ENCODE measurements at regions of chr9 and their contacts with region 1.

Region 1: GRCh38 chr9:9942764-9943424 is 669.9 kb downstream of the PTPRD start:
- DNase-seq: peak; percentile 56
- ATAC-seq: peak; percentile 65
- H3K4me3 ChIP-seq: no peak overlapping the region
- H3K4me3 Mint-ChIP-seq: no peak overlapping the region
- H3K27ac ChIP-seq: no peak overlapping the region
- H3K27ac Mint-ChIP-seq: no peak overlapping the region
- H3K4me1 ChIP-seq: no peaks in the 10 kb centered on the region
- H3K4me1 Mint-ChIP-seq: no peaks in the 10 kb centered on the region
- H3K27me3 ChIP-seq: no peaks in the 10 kb centered on the region
- H3K27me3 Mint-ChIP-seq: no peaks in the 10 kb centered on the region
- CTCF ChIP-seq: peak; percentile 95

Region 2: DNA sequence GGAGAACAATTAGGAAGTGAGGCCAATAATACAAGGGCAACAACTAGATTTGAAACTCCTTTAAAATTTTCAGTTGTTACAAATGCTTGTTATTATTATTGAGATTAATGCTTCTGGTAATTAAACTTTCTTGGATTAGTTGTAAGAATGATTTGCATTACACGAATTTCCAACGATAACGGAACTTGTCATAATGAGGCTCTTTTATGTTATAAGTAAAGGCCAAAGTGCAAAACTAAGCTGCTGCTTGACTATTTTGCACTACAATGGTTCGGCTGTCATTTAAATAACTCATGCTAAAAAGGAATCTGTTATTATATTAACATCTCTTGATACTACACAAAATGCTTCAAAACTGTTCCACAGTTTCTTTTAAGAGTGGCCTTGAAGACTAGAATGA is 337.2 kb before region 1 on chr9:
- CTCF ChIA-PET with region 1: interaction called, 30 read pairs
- POLR2A ChIA-PET with region 1: no interaction called
- intact Hi-C with region 1: loop called (anchors 1 kb)
- DNase-seq: no peak
- ATAC-seq: no peak
- H3K4me3 ChIP-seq: no peak overlapping the region
- H3K4me3 Mint-ChIP-seq: no peak overlapping the region
- H3K27ac ChIP-seq: no peak overlapping the region
- H3K27ac Mint-ChIP-seq: no peak overlapping the region
- H3K4me1 ChIP-seq: peaks cover 0 to 4% of the 10 kb centered on the region in 2 donors
- H3K4me1 Mint-ChIP-seq: peaks cover 2% of the 10 kb centered on the region
- H3K27me3 ChIP-seq: no peaks in the 10 kb centered on the region
- H3K27me3 Mint-ChIP-seq: no peaks in the 10 kb centered on the region
- CTCF ChIP-seq: no peak

Region 3: GRCh38 chr9:9881699-9882098 is 61.2 kb before region 1 on chr9:
- CTCF ChIA-PET with region 1: no interaction called
- POLR2A ChIA-PET with region 1: no interaction called
- intact Hi-C with region 1: no loop called
- DNase-seq: no peak
- ATAC-seq: no peak
- H3K4me3 ChIP-seq: no peak overlapping the region
- H3K4me3 Mint-ChIP-seq: no peak overlapping the region
- H3K27ac ChIP-seq: no peak overlapping the region
- H3K27ac Mint-ChIP-seq: no peak overlapping the region
- H3K4me1 ChIP-seq: no peaks in the 10 kb centered on the region
- H3K4me1 Mint-ChIP-seq: no peaks in the 10 kb centered on the region
- H3K27me3 ChIP-seq: no peaks in the 10 kb centered on the region
- H3K27me3 Mint-ChIP-seq: no peaks in the 10 kb centered on the region
- CTCF ChIP-seq: no peak

Region 4: GRCh38 chr9:9924376-9924775 is 18.5 kb before region 1 on chr9:
- CTCF ChIA-PET with region 1: interaction called, 11 read pairs
- POLR2A ChIA-PET with region 1: no interaction called
- intact Hi-C with region 1: no loop called
- DNase-seq: no peak
- ATAC-seq: no peak
- H3K4me3 ChIP-seq: no peak overlapping the region
- H3K4me3 Mint-ChIP-seq: no peak overlapping the region
- H3K27ac ChIP-seq: no peak overlapping the region
- H3K27ac Mint-ChIP-seq: no peak overlapping the region
- H3K4me1 ChIP-seq: no peaks in the 10 kb centered on the region
- H3K4me1 Mint-ChIP-seq: peaks cover 4% of the 10 kb centered on the region
- H3K27me3 ChIP-seq: no peaks in the 10 kb centered on the region
- H3K27me3 Mint-ChIP-seq: no peaks in the 10 kb centered on the region
- CTCF ChIP-seq: no peak

Region 5: DNA sequence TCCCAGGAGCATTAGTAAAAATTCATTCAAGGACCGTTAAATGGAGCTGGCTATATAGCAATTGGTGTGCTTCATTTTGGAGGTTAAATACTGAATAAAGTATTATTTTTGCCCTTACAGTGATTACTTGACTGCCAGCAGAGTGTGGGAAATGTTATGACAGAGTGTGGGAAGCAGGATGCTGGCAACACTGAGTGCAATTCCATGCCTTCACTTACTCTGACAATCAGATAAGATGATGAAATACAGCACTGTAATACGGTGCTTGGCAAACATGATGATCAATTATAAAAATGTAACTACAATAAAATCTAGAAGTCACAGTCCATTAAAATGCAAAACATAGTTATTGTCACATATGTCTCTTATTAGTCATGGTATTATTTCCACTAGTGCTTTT is 18.6 kb after region 1 on chr9:
- CTCF ChIA-PET with region 1: interaction called, 15 read pairs
- POLR2A ChIA-PET with region 1: no interaction called
- intact Hi-C with region 1: no loop called
- DNase-seq: no peak
- ATAC-seq: no peak
- H3K4me3 ChIP-seq: no peak overlapping the region
- H3K4me3 Mint-ChIP-seq: no peak overlapping the region
- H3K27ac ChIP-seq: no peak overlapping the region
- H3K27ac Mint-ChIP-seq: no peak overlapping the region
- H3K4me1 ChIP-seq: no peaks in the 10 kb centered on the region
- H3K4me1 Mint-ChIP-seq: no peaks in the 10 kb centered on the region
- H3K27me3 ChIP-seq: no peaks in the 10 kb centered on the region
- H3K27me3 Mint-ChIP-seq: no peaks in the 10 kb centered on the region
- CTCF ChIP-seq: no peak

Region 6: DNA sequence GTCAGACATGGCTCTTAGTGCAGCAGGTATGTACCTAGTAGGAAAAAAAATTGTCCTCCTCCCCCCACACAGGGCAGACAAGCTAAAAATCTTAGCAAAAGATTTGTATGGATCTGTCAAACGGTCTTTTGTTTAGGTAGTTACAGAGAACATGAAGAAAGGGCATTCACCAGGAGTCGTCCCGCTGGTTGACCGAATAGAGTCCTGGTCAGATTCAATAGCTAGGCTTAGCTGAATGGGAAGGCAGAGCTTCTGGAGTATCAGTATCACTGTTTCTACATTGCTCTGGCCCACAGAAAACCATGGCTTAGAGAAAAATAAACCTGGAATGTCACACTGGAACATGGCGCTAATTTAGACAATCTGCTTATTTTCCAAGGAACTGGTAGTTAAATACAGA is 27.6 kb after region 1 on chr9:
- CTCF ChIA-PET with region 1: interaction called, 12 read pairs
- POLR2A ChIA-PET with region 1: no interaction called
- intact Hi-C with region 1: no loop called
- DNase-seq: no peak
- ATAC-seq: no peak
- H3K4me3 ChIP-seq: no peak overlapping the region
- H3K4me3 Mint-ChIP-seq: no peak overlapping the region
- H3K27ac ChIP-seq: no peak overlapping the region
- H3K27ac Mint-ChIP-seq: no peak overlapping the region
- H3K4me1 ChIP-seq: no peaks in the 10 kb centered on the region
- H3K4me1 Mint-ChIP-seq: no peaks in the 10 kb centered on the region
- H3K27me3 ChIP-seq: no peaks in the 10 kb centered on the region
- H3K27me3 Mint-ChIP-seq: no peaks in the 10 kb centered on the region
- CTCF ChIP-seq: no peak

Region 7: GRCh38 chr9:10212702-10213101 is 269.8 kb after region 1 on chr9:
- CTCF ChIA-PET with region 1: no interaction called
- POLR2A ChIA-PET with region 1: no interaction called
- intact Hi-C with region 1: no loop called
- DNase-seq: no peak
- ATAC-seq: no peak
- H3K4me3 ChIP-seq: no peak overlapping the region
- H3K4me3 Mint-ChIP-seq: no peak overlapping the region
- H3K27ac ChIP-seq: no peak overlapping the region
- H3K27ac Mint-ChIP-seq: no peak overlapping the region
- H3K4me1 ChIP-seq: peaks cover 6 to 7% of the 10 kb centered on the region in 2 donors
- H3K4me1 Mint-ChIP-seq: peaks cover 11% of the 10 kb centered on the region
- H3K27me3 ChIP-seq: no peaks in the 10 kb centered on the region
- H3K27me3 Mint-ChIP-seq: no peaks in the 10 kb centered on the region
- CTCF ChIP-seq: no peak

Region 8: GRCh38 chr9:10411272-10411671 is 468.4 kb after region 1 on chr9:
- CTCF ChIA-PET with region 1: no interaction called
- POLR2A ChIA-PET with region 1: no interaction called
- intact Hi-C with region 1: no loop called
- DNase-seq: no peak
- ATAC-seq: no peak
- H3K4me3 ChIP-seq: no peak overlapping the region
- H3K4me3 Mint-ChIP-seq: no peak overlapping the region
- H3K27ac ChIP-seq: no peak overlapping the region
- H3K27ac Mint-ChIP-seq: no peak overlapping the region
- H3K4me1 ChIP-seq: no peaks in the 10 kb centered on the region
- H3K4me1 Mint-ChIP-seq: no peaks in the 10 kb centered on the region
- H3K27me3 ChIP-seq: no peaks in the 10 kb centered on the region
- H3K27me3 Mint-ChIP-seq: no peaks in the 10 kb centered on the region
- CTCF ChIP-seq: no peak

Measured in B cell (primary cell).